Posterior vena cava (tissue), 2 donors: ENCODE measurements at regions of chr22 and their contacts with region 1.

Region 1: GRCh38 chr22:37154925-37155712 is 5.4 kb upstream of the IL2RB start:
- DNase-seq: no peak

Region 2: GRCh38 chr22:37098976-37099591 is 56.0 kb before region 1 on chr22:
- intact Hi-C with region 1: loop called (anchors 1 to 10 kb)
- DNase-seq: no peak

Region 3: GRCh38 chr22:37121887-37122591 is 33.1 kb before region 1 on chr22:
- intact Hi-C with region 1: no loop called
- DNase-seq: no peak

Region 4: DNA sequence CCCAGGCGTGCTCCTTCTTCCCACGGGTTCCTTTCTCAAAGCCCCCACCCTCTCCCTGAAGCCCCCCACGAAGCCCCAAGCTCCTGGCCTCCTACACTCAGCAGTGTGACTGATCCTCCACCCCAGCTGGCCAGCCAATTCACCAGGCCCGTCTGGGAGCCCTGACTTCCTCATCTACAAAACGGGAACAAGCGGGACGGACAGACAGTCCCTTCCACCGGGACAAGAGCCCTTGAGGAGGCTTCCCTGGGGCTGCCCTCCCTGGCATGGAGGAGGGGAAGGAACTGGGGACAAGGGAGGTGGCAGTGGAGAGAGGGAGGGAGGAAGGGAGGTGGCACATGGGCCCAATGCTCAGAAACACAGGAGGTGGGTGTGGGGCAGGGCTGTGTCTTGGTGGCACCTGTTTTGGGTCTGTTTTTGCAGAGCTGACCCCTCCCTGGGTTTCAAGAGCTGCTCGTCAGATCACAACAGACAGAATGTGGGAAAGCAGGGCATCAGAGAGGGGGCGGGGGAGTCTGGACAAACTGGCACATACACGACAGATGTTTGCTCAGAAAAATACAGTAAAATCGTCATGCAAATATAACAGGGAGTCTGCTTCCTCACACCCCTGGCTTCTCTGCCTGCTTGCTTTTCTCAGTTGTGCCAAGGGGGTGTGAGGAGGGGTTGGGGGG is 215.3 kb after region 1 on chr22:
- intact Hi-C with region 1: no loop called
- DNase-seq: no peak